MCF 10A (cell line): ENCODE measurements at regions of chr7 and their contacts with region 1.

Region 1: DNA sequence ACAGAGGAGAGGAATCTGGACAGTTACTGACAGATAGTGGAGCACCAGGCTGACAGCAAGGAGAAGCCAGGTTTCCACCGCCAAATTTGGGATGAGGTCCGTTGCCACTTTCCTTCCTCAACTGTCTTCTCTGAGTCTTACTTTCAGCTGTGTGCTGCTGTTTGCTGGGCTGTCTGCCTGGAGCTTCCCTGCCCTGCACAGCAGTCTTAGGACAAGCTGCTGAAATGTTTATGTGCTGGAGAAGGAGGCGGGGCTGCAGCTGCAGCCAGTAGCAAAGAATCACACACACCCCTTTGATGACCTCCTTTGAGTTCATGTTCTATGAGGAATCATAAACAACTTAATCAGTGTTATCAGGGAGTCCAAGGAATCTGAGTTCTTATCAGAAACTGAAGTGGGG is 17.4 kb upstream of the CYP3A7 start:
- DNase-seq: no peak
- H3K4me3 Mint-ChIP-seq: peak overlapping the region; percentile 37
- H3K27ac Mint-ChIP-seq: peak overlapping the region; percentile 9
- H3K4me1 Mint-ChIP-seq: peaks cover 24% of the 10 kb centered on the region
- H3K27me3 Mint-ChIP-seq: no peaks in the 10 kb centered on the region
- CTCF ChIP-seq: no peak

Region 2: DNA sequence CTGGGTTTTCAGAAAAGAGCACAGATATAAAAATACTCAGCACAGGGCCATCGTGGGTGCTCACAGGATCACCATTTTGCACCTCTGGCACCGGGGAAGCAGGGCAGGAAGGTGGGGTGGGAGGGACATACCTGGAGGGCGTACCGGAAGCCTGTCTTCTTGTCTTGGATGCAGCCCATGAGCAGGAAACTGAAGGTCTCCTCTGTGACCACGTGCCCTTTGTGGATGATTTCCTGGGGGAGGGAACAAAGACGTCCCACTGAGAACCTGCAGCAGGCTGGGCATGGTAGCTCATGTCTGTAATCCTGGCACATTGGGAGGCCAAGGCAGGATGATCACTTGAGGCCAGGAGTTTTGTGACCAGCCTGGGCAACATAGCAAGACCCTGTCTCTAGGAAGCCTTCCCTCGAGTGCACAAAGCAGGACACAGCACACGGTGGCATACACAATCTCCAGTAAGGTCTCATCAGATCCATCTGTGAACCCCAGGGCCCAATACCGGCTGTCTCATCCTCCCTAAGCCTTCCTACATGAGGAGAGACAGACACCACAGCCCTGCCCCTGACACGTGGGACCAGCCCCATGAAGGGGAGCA is 323.3 kb before region 1 on chr7:
- CTCF ChIA-PET with region 1: no interaction called
- POLR2A ChIA-PET with region 1: no interaction called
- intact Hi-C with region 1: no loop called
- DNase-seq: no peak
- H3K4me3 Mint-ChIP-seq: no peak overlapping the region
- H3K27ac Mint-ChIP-seq: no peak overlapping the region
- H3K4me1 Mint-ChIP-seq: no peaks in the 10 kb centered on the region
- H3K27me3 Mint-ChIP-seq: no peaks in the 10 kb centered on the region
- CTCF ChIP-seq: no peak

Region 3: DNA sequence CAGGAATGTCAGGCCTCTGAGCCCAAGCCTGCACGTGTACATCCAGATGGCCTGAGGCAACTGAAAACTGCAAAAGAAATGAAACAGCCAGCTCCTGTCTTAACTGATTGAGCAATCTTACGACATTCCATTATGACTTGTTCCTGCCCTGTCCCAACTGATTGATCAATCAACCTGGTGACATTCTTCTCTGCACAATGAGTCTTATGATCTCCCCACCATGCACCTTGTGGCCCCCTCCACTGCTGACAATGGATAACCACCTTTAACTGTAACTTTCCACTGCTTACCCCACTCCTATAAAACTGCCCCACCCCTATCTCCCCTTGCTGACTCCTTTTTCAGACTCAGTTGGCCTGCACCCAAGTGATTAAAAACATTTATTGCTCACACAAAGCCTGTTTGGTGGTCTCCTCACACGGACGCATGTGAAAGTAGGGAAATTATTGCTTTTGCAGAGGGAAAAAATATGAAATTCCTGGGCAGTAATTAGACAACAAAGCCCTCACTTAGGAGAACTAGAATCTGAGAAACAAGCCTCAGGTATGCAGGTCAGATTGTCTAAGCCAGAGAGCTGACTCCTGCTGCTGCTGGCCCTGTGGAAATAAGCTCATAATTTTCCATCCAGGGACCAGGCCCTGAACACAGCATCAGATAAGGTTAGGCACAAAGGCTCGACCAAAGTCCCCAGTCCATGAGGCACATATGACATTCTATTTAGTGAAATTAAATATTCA is 22.7 kb before region 1 on chr7:
- CTCF ChIA-PET with region 1: no interaction called
- POLR2A ChIA-PET with region 1: interaction called, 19 read pairs
- intact Hi-C with region 1: no loop called
- DNase-seq: peak; percentile 85
- H3K4me3 Mint-ChIP-seq: no peak overlapping the region
- H3K27ac Mint-ChIP-seq: no peak overlapping the region
- H3K4me1 Mint-ChIP-seq: no peaks in the 10 kb centered on the region
- H3K27me3 Mint-ChIP-seq: no peaks in the 10 kb centered on the region
- CTCF ChIP-seq: no peak

Region 4: GRCh38 chr7:99762680-99763327 is 10.4 kb after region 1 on chr7:
- CTCF ChIA-PET with region 1: interaction called, 3 read pairs
- POLR2A ChIA-PET with region 1: interaction called, 45 read pairs
- intact Hi-C with region 1: no loop called
- DNase-seq: peak; percentile 57
- H3K4me3 Mint-ChIP-seq: peak overlapping the region; percentile 19
- H3K27ac Mint-ChIP-seq: peak overlapping the region; percentile 56
- H3K4me1 Mint-ChIP-seq: peaks cover 16% of the 10 kb centered on the region
- H3K27me3 Mint-ChIP-seq: no peaks in the 10 kb centered on the region
- CTCF ChIP-seq: no peak

Region 5: GRCh38 chr7:99829524-99830160 is 77.3 kb after region 1 on chr7:
- CTCF ChIA-PET with region 1: no interaction called
- POLR2A ChIA-PET with region 1: interaction called, 20 read pairs
- intact Hi-C with region 1: no loop called
- DNase-seq: no peak
- H3K4me3 Mint-ChIP-seq: no peak overlapping the region
- H3K27ac Mint-ChIP-seq: no peak overlapping the region
- H3K4me1 Mint-ChIP-seq: peaks cover 45% of the 10 kb centered on the region
- H3K27me3 Mint-ChIP-seq: no peaks in the 10 kb centered on the region
- CTCF ChIP-seq: no peak